ENCODE measurements at regions of chr2 and their contacts with region 1.

Region 1: DNA sequence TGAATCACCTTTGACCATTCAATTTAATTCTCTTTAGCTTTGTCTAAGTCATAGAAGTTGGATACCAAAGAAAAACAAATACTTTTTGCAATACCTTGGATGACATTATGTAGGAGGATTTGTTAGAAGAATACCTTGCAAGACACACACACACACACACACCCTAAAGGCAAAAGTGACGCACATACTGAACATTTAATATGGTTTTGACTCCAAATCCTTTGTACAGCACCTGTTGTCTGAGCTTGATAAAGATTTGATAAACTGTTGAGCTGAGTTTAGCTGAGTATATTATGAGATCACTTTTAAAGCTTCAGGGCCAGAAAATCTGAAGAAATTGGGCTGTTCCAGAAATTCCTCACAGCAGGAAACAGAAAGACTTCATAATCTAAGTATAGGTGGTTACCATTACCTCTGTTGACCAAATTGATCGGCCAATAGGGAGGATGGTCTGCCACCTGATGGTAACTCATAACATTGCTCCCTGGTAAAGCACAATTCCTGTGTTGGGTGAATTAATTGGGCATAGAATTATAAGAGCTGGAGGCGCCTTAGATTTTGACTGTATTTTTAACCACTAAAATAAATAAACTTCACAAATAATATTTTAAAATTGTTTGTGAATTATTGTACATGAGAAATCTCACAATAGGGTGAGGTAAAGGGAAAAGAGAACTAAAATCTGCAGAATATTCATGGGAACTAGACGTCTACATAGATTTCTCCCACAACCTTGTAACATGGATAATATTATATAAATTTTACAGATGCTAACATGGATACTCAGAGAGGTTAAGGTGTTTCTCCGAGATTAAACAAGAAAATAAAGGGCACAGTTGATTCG is 21.9 kb upstream of the RPIA start:
- DNase-seq: peak in 4 of 5 donors; percentile 6 to 50 (median 9)
- H3K4me3 ChIP-seq: no peak overlapping the region
- H3K4me3 Mint-ChIP-seq: no peak overlapping the region
- H3K27ac ChIP-seq: no peak overlapping the region
- H3K27ac Mint-ChIP-seq: no peak overlapping the region
- H3K4me1 ChIP-seq: no peaks in the 10 kb centered on the region
- H3K4me1 Mint-ChIP-seq: no peaks in the 10 kb centered on the region
- H3K27me3 ChIP-seq: no peaks in the 10 kb centered on the region
- H3K27me3 Mint-ChIP-seq: peaks cover 3 to 5% of the 10 kb centered on the region in 2 donors

Region 2: DNA sequence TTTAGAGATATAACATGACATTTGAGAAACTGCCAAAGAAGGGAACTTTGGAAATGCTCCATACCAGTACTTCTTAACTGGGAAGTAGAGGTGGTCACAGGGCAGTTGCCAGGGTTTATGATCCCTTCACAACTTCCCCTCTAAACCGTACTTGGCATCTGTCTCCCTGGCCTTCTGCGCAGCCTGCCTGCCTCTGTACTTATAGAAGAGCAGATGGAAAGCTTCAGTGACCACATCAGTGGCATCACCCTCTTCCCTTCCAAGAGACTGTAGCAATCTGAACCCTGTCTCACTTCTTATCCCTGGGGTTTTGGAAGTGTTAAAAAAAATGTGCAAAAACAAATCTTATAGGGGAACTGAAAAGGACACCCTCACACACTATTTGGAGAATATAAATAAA is 106.5 kb before region 1 on chr2:
- CTCF ChIA-PET with region 1: no interaction called
- POLR2A ChIA-PET with region 1: no interaction called
- DNase-seq: no peak
- H3K4me3 ChIP-seq: no peak overlapping the region
- H3K4me3 Mint-ChIP-seq: no peak overlapping the region
- H3K27ac ChIP-seq: no peak overlapping the region
- H3K27ac Mint-ChIP-seq: peak overlapping the region in 3 of 8 donors; percentile 19 to 43 (median 29)
- H3K4me1 ChIP-seq: no peaks in the 10 kb centered on the region
- H3K4me1 Mint-ChIP-seq: peaks cover 3 to 16% (median 11%) of the 10 kb centered on the region in 3 donors
- H3K27me3 ChIP-seq: no peaks in the 10 kb centered on the region
- H3K27me3 Mint-ChIP-seq: no peaks in the 10 kb centered on the region

Region 3: GRCh38 chr2:88590998-88591613 is 78.5 kb before region 1 on chr2:
- CTCF ChIA-PET with region 1: interaction called, 74 read pairs
- POLR2A ChIA-PET with region 1: no interaction called
- DNase-seq: peak in 4 of 5 donors; percentile 7 to 56 (median 34)
- H3K4me3 ChIP-seq: no peak overlapping the region
- H3K4me3 Mint-ChIP-seq: no peak overlapping the region
- H3K27ac ChIP-seq: no peak overlapping the region
- H3K27ac Mint-ChIP-seq: peak overlapping the region in 2 of 8 donors; percentile 38 to 82
- H3K4me1 ChIP-seq: no peaks in the 10 kb centered on the region
- H3K4me1 Mint-ChIP-seq: peaks cover 0 to 7% (median 4%) of the 10 kb centered on the region in 3 donors
- H3K27me3 ChIP-seq: no peaks in the 10 kb centered on the region
- H3K27me3 Mint-ChIP-seq: no peaks in the 10 kb centered on the region

Region 4: DNA sequence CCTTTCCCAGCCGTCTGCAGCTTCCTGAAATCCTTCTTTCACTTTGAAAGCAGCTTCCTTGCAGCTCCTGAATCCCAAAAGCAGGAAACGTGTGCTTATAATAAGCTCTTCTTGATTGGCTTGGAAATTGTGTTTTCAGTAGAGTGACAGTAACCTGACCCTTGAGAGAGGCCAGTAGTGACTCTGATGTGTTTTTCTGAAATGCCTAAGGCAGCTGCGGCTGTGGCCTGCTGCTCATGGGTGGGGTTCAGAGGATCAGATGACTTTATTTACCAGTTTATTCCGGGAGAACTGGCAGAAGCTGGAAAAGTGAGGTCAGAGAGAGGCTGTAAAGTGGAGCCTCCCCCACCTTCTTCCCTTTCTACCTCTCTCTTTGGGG is 10.1 kb before region 1 on chr2:
- CTCF ChIA-PET with region 1: interaction called, 19 read pairs
- POLR2A ChIA-PET with region 1: no interaction called
- DNase-seq: no peak
- H3K4me3 ChIP-seq: no peak overlapping the region
- H3K4me3 Mint-ChIP-seq: no peak overlapping the region
- H3K27ac ChIP-seq: peak overlapping the region; percentile 40
- H3K27ac Mint-ChIP-seq: no peak overlapping the region
- H3K4me1 ChIP-seq: no peaks in the 10 kb centered on the region
- H3K4me1 Mint-ChIP-seq: no peaks in the 10 kb centered on the region
- H3K27me3 ChIP-seq: no peaks in the 10 kb centered on the region
- H3K27me3 Mint-ChIP-seq: peaks cover 0 to 2% of the 10 kb centered on the region in 2 donors

Region 5: GRCh38 chr2:88765154-88765900 is 95.7 kb after region 1 on chr2:
- CTCF ChIA-PET with region 1: no interaction called
- POLR2A ChIA-PET with region 1: no interaction called
- DNase-seq: peak in 1 of 5 donors; percentile 41
- H3K4me3 ChIP-seq: no peak overlapping the region
- H3K4me3 Mint-ChIP-seq: peak overlapping the region in 6 of 7 donors; percentile 24 to 65 (median 51)
- H3K27ac ChIP-seq: no peak overlapping the region
- H3K27ac Mint-ChIP-seq: no peak overlapping the region
- H3K4me1 ChIP-seq: no peaks in the 10 kb centered on the region
- H3K4me1 Mint-ChIP-seq: peaks cover 0 to 4% (median 4%) of the 10 kb centered on the region in 3 donors
- H3K27me3 ChIP-seq: no peaks in the 10 kb centered on the region
- H3K27me3 Mint-ChIP-seq: peaks cover 11 to 41% of the 10 kb centered on the region in 2 donors

Measured in CD8-positive, alpha-beta memory T cell (primary cell).